Endothelial cell of umbilical vein (primary cell): ENCODE measurements at regions of chr15 and their contacts with region 1.

Region 1: DNA sequence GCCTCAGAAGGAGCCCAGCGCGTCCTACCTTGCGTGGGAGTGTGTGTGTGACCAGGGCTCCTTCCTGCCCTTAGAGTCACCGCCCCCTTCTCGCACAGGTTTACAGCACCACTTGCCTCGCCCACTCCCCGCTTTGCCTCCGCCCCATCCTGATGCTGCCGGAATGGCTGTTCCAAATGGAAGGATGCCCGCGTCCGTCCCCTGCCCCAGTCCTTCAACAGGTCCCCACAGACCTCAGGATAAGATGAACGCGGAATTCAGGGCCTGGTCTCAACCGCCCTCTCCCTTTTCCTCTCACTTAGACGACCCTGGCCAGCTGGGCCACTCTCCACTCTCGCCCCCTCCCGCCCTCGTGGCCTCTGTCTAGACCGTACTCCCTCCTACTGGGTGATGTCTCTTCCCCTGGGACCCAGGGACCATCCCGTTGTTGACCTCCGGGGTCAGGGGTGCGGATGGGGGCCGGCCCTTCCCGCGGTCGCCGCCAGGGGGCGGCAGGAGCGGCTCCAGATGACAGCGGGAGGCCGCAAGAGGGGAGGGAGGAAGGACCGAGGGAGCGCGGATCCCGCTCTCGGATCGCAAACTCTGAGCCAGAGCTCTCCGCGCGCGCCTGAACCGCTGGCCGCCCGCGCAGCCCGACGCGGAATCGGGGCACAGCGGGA is at the start of gene THSD4:
- DNase-seq: peak; percentile 60
- H3K4me3 ChIP-seq: peak within 1 kb of the TSS; percentile 61 to 87 (median 66)
- H3K27ac ChIP-seq: peak within 1 kb of the TSS; percentile 66
- H3K4me1 ChIP-seq: peaks cover 7% of the 10 kb centered on the region
- H3K27me3 ChIP-seq: no peaks in the 10 kb centered on the region
- CTCF ChIP-seq: peak; percentile 97 to 98
- POLR2A ChIP-seq: no peak
- total RNA-seq, gene THSD4: 20.2 and 25.4 TPM in 2 replicates

Region 2: DNA sequence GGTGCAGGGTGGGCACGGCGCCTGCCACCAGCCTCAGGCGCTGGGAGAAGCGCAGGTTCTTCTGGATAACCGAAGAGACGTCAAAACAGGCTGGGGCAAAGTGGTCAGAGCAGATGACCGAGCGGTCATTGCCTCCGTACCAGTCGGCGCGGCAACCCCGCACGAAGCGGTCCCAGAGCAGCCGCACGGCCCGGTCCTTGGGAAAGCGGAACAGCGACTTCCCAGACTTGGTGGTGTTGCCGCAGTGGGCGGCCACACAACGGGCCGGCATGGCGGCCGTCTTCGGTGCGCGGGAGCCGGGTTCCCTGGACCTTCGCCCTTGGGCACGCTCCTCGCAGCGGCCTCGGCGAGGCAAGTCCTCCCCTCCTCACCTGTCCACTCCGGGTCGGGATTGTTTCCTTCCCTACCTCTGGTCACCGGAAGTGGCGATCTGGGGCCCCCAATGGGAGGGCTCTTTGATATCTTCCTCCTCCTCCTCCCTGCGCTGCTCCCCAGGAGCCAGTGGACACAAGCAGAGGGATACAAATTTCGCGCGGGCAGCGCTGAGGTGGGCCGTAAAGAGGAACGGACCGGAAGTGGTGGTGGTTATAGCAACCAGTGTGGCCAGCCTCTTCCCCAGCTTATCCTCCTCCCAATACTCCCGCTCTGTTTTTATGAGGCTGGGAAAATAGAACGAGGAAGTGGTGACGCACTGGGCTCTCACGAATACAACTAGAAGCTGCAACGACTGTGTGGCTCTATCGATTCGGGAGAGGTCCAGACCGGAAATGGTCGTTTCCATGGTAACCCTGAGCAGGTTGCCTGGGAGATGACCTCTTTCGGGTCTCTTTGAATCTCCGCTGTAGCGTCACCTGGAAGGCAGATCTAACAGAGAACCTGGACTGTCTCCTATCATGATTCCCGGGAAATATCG is 222.8 kb before region 1 on chr15 and contains the starts of genes LRRC49 and THAP10:
- CTCF ChIA-PET with region 1: no interaction called
- POLR2A ChIA-PET with region 1: no interaction called
- dilution Hi-C with region 1: no loop called
- intact Hi-C with region 1: loop called (anchors 2 kb)
- DNase-seq: peak; percentile 98
- H3K4me3 ChIP-seq: peak within 1 kb of the TSS; percentile 47 to 81 (median 69)
- H3K27ac ChIP-seq: peak within 1 kb of the TSS; percentile 86
- H3K4me1 ChIP-seq: peaks cover 17% of the 10 kb centered on the region
- H3K27me3 ChIP-seq: no peaks in the 10 kb centered on the region
- CTCF ChIP-seq: no peak
- POLR2A ChIP-seq: no peak
- total RNA-seq, gene LRRC49: 6.6 and 7.4 TPM in 2 replicates
- total RNA-seq, gene THAP10: 2.7 and 4.0 TPM in 2 replicates

Region 3: GRCh38 chr15:71136159-71136783 is 21.2 kb after region 1 on chr15:
- CTCF ChIA-PET with region 1: interaction called, 3 read pairs
- POLR2A ChIA-PET with region 1: interaction called, 7 read pairs
- dilution Hi-C with region 1: no loop called
- intact Hi-C with region 1: loop called (anchors 1 kb)
- DNase-seq: peak; percentile 56
- H3K4me3 ChIP-seq: no peak overlapping the region
- H3K27ac ChIP-seq: peak overlapping the region; percentile 81
- H3K4me1 ChIP-seq: peaks cover 48% of the 10 kb centered on the region
- H3K27me3 ChIP-seq: no peaks in the 10 kb centered on the region
- CTCF ChIP-seq: no peak
- POLR2A ChIP-seq: no peak

Region 4: DNA sequence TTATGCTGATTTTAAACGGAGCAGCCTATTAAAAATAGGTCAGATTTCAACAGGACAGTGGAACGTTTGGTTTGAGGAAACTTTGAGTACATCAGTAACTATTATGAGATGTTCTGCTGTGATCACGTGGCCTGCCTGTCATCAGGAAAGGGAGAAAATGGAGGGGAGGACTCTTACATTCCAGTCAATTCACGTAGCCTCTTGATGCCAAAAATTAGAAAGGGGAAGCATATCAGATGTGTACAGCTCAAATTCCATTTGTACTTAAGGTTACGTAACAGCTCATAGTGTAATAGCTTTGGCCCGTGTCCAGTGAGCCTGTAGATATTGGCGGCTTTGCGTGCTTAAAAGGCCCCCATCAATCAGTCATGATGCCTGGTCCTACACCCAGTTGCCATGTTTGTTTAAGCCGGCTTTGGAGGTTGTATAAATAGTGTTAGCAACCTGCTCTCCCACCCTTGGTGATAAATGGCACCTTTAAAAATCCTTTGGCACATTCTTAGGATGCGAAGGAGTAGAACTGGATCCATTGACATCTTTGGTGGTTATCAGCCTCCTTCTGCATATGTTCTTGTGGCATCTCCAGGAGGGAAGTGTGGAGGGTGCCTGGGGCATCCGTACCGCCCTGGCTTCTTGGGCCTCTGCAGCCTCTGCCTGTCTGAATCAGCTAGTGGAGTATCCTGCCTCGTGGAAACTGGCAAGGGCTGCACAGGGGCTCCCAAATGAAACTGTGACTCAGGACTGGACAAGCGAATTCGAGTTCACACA is 164.1 kb after region 1 on chr15:
- CTCF ChIA-PET with region 1: interaction called, 3 read pairs
- POLR2A ChIA-PET with region 1: no interaction called
- dilution Hi-C with region 1: no loop called
- intact Hi-C with region 1: loop called (anchors 1 kb)
- DNase-seq: peak; percentile 93
- H3K4me3 ChIP-seq: no peak overlapping the region
- H3K27ac ChIP-seq: peak overlapping the region; percentile 54
- H3K4me1 ChIP-seq: peaks cover 44% of the 10 kb centered on the region
- H3K27me3 ChIP-seq: no peaks in the 10 kb centered on the region
- CTCF ChIP-seq: no peak
- POLR2A ChIP-seq: no peak

Region 5: DNA sequence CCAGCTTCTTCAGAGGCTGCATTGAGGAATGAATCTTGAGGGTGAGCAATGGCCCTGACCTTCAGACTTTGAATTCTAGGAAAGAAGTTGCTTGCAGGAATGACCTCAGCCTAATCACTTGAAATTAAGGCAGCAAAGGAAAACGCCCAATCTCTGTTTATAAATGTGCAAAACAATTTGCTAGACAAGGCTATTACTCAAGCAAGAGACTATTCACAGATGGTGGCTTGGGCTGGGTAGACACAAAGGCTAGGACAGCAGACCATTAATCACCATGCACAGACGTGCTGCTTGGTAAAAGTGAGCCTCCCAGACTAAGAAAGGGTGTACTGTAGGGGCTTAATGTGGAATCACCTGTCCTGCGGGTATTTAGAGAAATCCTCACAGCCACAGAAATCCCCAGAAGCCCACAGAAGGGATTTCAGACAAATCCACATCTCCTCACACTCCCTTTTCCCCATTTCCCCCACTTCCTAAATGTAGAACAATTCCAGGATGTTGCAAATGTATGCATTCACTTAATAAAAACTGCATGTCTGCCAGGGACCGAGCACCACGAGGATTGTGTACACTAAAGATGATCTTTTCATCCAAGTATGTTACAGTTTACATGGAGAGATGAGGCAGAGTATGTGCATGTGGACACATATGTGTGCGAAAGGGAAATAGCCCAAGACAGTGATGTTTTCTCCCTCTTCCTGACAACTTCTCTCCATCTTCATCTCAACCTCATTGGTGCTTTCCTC is 259.8 kb after region 1 on chr15:
- CTCF ChIA-PET with region 1: no interaction called
- POLR2A ChIA-PET with region 1: no interaction called
- dilution Hi-C with region 1: no loop called
- intact Hi-C with region 1: loop called (anchors 5 kb)
- DNase-seq: peak; percentile 79
- H3K4me3 ChIP-seq: no peak overlapping the region
- H3K27ac ChIP-seq: peak overlapping the region; percentile 84
- H3K4me1 ChIP-seq: peaks cover 30% of the 10 kb centered on the region
- H3K27me3 ChIP-seq: no peaks in the 10 kb centered on the region
- CTCF ChIP-seq: no peak
- POLR2A ChIP-seq: no peak

Region 6: GRCh38 chr15:72272213-72273002 is 1157.4 kb after region 1 on chr15 and contains the start of gene PARP6:
- CTCF ChIA-PET with region 1: no interaction called
- POLR2A ChIA-PET with region 1: no interaction called
- dilution Hi-C with region 1: no loop called
- intact Hi-C with region 1: no loop called
- DNase-seq: peak; percentile 99
- H3K4me3 ChIP-seq: peak within 1 kb of the TSS; percentile 45 to 97 (median 66)
- H3K27ac ChIP-seq: peak within 1 kb of the TSS; percentile 57
- H3K4me1 ChIP-seq: peaks cover 12% of the 10 kb centered on the region
- H3K27me3 ChIP-seq: no peaks in the 10 kb centered on the region
- CTCF ChIP-seq: peak; percentile 31 to 74
- POLR2A ChIP-seq: peak; percentile 58
- total RNA-seq, gene PARP6: 37.4 and 41.1 TPM in 2 replicates